Vagina (tissue), 2 donors: ENCODE measurements at regions of chr19 and their contacts with region 1.

Region 1: DNA sequence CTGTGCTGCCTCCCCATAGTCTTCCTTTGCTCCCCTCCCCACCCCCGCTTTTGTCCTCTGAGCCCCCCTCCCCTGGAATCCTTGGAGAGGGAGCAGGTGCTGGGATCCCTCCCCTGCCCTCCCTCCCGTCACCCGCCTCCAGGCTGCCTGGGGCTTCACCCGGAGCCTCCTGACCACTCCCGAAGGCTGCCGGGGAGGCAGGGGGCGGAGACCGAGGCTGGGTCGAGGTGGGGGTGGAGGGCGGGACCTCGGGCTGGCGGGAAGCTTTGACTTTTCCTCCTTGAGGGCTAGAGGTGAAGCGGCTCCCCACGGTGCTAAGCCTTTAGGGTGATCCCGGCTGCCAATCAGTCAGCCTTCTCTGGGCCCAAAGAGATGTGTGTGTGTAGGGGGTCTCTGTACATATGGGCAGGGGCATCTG is 1.5 kb downstream of the KMT5C start:
- DNase-seq: no peak
- H3K4me3 ChIP-seq: peak overlapping the region; percentile 61 to 68
- H3K27ac ChIP-seq: peak overlapping the region; percentile 84
- H3K4me1 ChIP-seq: peaks cover 37% of the 10 kb centered on the region
- H3K27me3 ChIP-seq: no peaks in the 10 kb centered on the region
- CTCF ChIP-seq: no peak
- POLR2A ChIP-seq: no peak

Region 2: GRCh38 chr19:55385740-55386529 is 44.8 kb after region 1 on chr19 and contains the start of gene RPL28:
- intact Hi-C with region 1: loop called (anchors 2 kb)
- DNase-seq: peak in 1 of 2 donors; percentile 99
- H3K4me3 ChIP-seq: peak within 1 kb of the TSS; percentile 70 to 76
- H3K27ac ChIP-seq: peak within 1 kb of the TSS; percentile 96
- H3K4me1 ChIP-seq: peaks cover 63% of the 10 kb centered on the region
- H3K27me3 ChIP-seq: no peaks in the 10 kb centered on the region
- CTCF ChIP-seq: no peak
- POLR2A ChIP-seq: peak; percentile 12 to 96
- total RNA-seq, gene RPL28: 1,166 TPM

Region 3: GRCh38 chr19:55437410-55438075 is 96.4 kb after region 1 on chr19:
- intact Hi-C with region 1: no loop called
- DNase-seq: no peak
- H3K4me3 ChIP-seq: no peak overlapping the region
- H3K27ac ChIP-seq: no peak overlapping the region
- H3K4me1 ChIP-seq: peaks cover 20% of the 10 kb centered on the region
- H3K27me3 ChIP-seq: peaks cover 17% of the 10 kb centered on the region
- CTCF ChIP-seq: no peak
- POLR2A ChIP-seq: no peak

Region 4: GRCh38 chr19:55487632-55488152 is 146.5 kb after region 1 on chr19:
- intact Hi-C with region 1: no loop called
- DNase-seq: peak in 1 of 2 donors; percentile 90
- H3K4me3 ChIP-seq: peak overlapping the region; percentile 30 to 35
- H3K27ac ChIP-seq: peak overlapping the region; percentile 95
- H3K4me1 ChIP-seq: peaks cover 84% of the 10 kb centered on the region
- H3K27me3 ChIP-seq: no peaks in the 10 kb centered on the region
- CTCF ChIP-seq: no peak
- POLR2A ChIP-seq: no peak